ENCODE measurements at regions of chr4 and their contacts with region 1.

Region 1: GRCh38 chr4:159102622-159103383 is at the start of gene RAPGEF2:
- DNase-seq: peak; percentile 96
- ATAC-seq: peak; percentile 96
- total RNA-seq, gene RAPGEF2: 42.8 TPM

Region 2: DNA sequence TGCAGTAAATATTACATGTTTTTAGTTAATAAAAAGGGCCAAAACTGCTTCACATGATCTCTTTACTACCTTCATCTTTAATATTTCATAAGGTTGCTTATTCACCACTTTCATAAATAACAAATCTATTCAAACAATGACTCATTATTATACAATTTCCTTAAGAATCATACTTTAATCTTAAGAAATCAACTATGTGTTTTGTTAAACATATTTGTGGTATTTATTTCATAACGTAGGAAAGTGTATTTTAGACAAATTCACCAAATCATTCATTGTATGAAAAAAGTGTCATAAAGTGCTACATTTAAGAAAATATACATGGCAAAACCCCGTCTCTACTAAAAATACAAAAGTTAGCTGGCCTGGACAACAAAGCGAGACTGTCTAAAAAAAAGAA is 731.6 kb before region 1 on chr4:
- intact Hi-C with region 1: no loop called
- DNase-seq: no peak
- ATAC-seq: no peak

Region 3: DNA sequence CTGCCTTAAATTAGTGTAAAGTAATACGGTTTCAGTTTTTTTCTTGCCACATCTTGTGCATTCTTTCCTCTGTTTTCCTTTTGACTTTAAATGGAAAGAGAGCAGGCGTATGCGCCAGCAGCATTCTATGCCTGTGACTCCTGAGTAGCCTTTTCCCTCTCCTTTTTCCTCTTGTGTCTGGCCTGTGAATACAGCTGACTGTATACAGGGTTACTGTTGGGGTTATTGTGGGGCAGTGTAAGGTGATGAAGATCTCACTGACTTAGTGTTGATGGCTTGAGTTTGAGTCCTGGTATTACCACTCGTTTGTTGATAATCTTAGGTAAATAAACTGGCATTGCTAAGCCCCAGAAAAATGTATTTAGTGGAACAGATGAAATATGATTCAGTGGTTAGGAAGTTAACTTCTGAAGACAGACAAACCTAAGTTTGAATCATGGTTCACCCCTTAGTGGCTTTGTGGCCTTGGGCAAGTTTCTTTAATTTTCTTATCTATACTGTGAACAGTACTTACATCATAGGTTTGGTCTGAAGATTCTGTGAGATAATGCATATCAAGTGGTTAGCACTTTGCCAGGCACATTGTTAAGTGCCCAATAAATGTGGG is 228.9 kb before region 1 on chr4:
- intact Hi-C with region 1: loop called (anchors 10 kb)
- DNase-seq: no peak
- ATAC-seq: no peak

Region 4: GRCh38 chr4:159010563-159011260 is 92.1 kb before region 1 on chr4:
- intact Hi-C with region 1: loop called (anchors 2 kb)
- DNase-seq: no peak
- ATAC-seq: peak; percentile 91

Region 5: GRCh38 chr4:159159611-159160010 is 56.8 kb after region 1 on chr4:
- intact Hi-C with region 1: loop called (anchors 5 kb)
- DNase-seq: no peak
- ATAC-seq: no peak

Region 6: GRCh38 chr4:159341522-159341921 is 238.7 kb after region 1 on chr4:
- intact Hi-C with region 1: loop called (anchors 10 kb)
- DNase-seq: no peak
- ATAC-seq: no peak

Measured in Right ventricle myocardium inferior (tissue), 1 donor.